Right cardiac atrium (tissue), 5 donors: ENCODE measurements at regions of chr15 and their contacts with region 1.

Region 1: GRCh38 chr15:91271565-91272153 is 171.6 kb downstream of the SV2B start:
- DNase-seq: peak in 2 of 3 donors; percentile 39 to 74
- ATAC-seq: peak; percentile 68 to 74
- H3K4me3 ChIP-seq: no peak overlapping the region
- H3K27ac ChIP-seq: no peak overlapping the region
- H3K4me1 ChIP-seq: no peaks in the 10 kb centered on the region
- H3K27me3 ChIP-seq: no peaks in the 10 kb centered on the region

Region 2: DNA sequence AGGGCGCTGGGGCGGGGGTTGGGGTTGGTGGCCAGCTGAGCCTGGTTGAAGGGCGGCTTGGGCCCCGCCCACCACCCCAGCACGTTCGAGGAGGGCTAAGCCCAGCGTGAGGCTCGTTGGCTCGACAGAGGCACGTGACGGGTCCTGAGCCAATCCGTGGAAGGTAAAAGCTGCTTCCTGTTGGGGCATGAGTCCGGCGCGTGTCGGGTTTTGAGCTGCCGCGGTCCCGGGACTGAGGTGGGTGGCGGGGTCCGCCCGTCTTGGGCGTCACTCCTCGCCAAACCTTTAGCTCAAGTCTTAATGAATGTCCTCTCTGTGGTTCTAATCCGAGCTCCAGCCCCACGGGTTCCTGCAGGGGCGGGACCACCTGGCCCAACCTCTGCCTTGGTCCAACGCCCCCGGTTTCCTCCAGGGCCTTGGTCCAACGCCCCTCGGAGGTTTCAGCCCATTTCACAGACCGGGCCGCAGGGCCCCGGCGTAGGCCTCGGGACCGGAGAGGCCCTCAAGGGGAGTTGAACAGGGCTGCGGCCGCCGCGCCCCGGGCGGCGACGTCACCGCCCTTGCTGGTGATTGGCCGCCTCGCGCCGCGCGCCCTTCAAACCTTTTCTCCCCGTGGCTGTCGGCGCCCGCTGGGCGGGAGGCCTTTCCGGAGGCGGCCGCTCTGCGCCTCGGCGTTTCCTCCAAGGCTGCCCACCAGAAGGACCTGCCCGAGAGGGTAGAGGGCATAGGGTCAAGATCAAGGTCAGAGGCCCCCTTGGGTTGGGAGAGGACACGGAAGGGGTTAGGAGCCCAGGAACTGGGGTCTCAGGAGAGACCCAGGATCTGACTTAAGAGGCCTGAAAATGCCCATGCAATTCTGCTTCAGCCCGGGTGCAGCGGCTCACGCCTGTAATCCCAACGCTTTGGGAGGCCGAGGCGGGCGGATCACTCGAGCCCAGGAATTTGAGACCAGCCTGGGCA is 316.7 kb before region 1 on chr15 and contains the start of gene RCCD1:
- intact Hi-C with region 1: loop called (anchors 5 to 10 kb)
- DNase-seq: peak; percentile 97 to 99 (median 98)
- ATAC-seq: peak; percentile 94 to 95
- H3K4me3 ChIP-seq: peak within 1 kb of the TSS; percentile 54
- H3K27ac ChIP-seq: peak within 1 kb of the TSS; percentile 71
- H3K4me1 ChIP-seq: no peaks in the 10 kb centered on the region
- H3K27me3 ChIP-seq: no peaks in the 10 kb centered on the region
- total RNA-seq, gene RCCD1: 8.7 to 14.8 (median 13.4) TPM

Region 3: DNA sequence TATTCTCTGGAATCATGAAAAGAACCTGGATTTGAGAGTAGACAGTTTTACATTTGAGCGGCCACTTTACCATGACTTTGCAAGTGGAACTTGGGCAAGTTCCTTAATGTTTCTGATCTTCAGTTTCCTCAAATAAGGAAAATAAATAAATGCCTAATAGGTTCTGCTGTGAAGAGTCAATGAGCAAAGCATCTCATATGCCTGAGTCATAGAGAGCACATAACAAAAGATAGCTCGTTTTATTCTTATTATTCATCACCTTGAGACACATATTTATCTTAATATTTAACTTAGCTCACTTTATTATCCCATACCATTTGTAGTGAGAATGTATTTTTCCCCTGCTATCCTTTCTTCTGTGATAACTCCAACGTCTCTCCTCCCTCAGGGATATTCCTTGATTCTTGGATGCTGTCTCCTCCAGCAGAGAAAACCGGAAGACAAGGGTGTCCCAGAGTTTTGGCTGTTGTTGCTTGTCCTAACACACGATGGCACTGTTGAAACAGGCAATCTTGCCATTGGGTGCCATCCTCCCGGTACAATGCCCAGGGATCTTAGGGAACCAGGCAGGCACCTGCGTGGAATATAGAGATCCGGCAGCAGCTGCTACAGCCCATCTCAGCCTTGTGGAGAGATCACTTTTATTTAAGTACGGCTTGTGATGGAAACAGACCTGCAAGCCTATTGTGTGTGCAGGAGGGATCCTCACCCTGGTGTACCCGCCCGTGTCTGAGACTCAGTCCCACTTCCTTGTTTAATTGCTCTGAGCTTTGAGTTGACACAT is 215.9 kb before region 1 on chr15:
- intact Hi-C with region 1: loop called (anchors 2 to 5 kb)
- DNase-seq: peak; percentile 41 to 60 (median 56)
- ATAC-seq: peak; percentile 66 to 75
- H3K4me3 ChIP-seq: no peak overlapping the region
- H3K27ac ChIP-seq: no peak overlapping the region
- H3K4me1 ChIP-seq: no peaks in the 10 kb centered on the region
- H3K27me3 ChIP-seq: no peaks in the 10 kb centered on the region